CD8-positive, alpha-beta T cell (primary cell): ENCODE measurements at regions of chr1 and their contacts with region 1.

Region 1: GRCh38 chr1:206479183-206480125 is 9.2 kb downstream of the IKBKE start:
- DNase-seq: peak; percentile 46 to 82 (median 73)
- ATAC-seq: peak; percentile 93
- H3K4me3 ChIP-seq: no peak overlapping the region
- H3K4me3 Mint-ChIP-seq: no peak overlapping the region
- H3K27ac ChIP-seq: no peak overlapping the region
- H3K27ac Mint-ChIP-seq: peak overlapping the region; percentile 80
- H3K4me1 ChIP-seq: peaks cover 13% of the 10 kb centered on the region
- H3K4me1 Mint-ChIP-seq: peaks cover 10% of the 10 kb centered on the region
- H3K27me3 ChIP-seq: no peaks in the 10 kb centered on the region
- H3K27me3 Mint-ChIP-seq: no peaks in the 10 kb centered on the region
- CTCF ChIP-seq: peak; percentile 80

Region 2: GRCh38 chr1:206461602-206462455 is 17.6 kb before region 1 on chr1:
- CTCF ChIA-PET with region 1: interaction called, 170 read pairs
- POLR2A ChIA-PET with region 1: interaction called, 3 read pairs
- intact Hi-C with region 1: loop called (anchors 1 kb)
- DNase-seq: peak; percentile 54 to 82 (median 74)
- ATAC-seq: peak; percentile 95
- H3K4me3 ChIP-seq: no peak overlapping the region
- H3K4me3 Mint-ChIP-seq: no peak overlapping the region
- H3K27ac ChIP-seq: no peak overlapping the region
- H3K27ac Mint-ChIP-seq: no peak overlapping the region
- H3K4me1 ChIP-seq: peaks cover 10% of the 10 kb centered on the region
- H3K4me1 Mint-ChIP-seq: peaks cover 19% of the 10 kb centered on the region
- H3K27me3 ChIP-seq: no peaks in the 10 kb centered on the region
- H3K27me3 Mint-ChIP-seq: no peaks in the 10 kb centered on the region
- CTCF ChIP-seq: peak; percentile 75

Region 3: DNA sequence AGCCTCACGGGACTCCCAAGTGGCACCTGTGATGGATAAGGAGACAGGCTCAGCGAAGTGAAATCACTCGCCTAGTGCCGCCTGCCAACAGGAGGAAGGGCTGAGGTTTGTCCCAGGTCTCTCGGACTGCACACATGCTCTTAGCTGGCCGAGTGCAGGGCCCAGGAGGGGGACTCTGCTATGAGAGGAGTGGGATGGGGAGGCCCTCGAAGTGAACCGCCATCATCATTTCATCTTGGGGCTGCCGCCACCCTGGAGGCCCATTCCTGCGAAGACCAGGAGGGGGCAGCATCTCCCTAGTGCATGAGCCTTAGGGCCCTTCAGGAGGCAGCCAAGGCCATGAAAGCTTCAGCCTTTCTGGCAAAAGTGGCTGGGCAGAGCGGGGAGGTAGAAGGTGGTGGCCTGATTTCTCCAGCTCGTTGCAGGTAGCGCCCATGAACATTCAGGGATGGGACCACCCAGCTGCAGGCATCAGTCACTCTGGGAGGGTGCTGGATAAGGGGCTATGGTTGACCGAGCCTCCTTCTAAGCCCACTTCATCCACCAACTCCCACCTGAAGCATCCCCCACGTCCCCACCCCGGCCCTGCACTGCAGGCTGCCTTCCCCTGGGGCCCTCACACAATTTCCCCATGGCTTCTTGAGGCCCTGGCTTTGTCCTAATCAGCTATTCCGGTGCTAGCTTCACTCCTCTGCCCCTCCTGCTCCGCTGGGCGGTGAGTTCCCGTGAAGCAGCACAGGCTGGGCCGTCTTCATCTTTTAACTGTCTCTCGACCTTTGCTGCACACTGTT is 10.7 kb after region 1 on chr1:
- CTCF ChIA-PET with region 1: interaction called, 24 read pairs
- POLR2A ChIA-PET with region 1: no interaction called
- intact Hi-C with region 1: no loop called
- DNase-seq: peak; percentile 47 to 76 (median 71)
- ATAC-seq: peak; percentile 91
- H3K4me3 ChIP-seq: no peak overlapping the region
- H3K4me3 Mint-ChIP-seq: no peak overlapping the region
- H3K27ac ChIP-seq: no peak overlapping the region
- H3K27ac Mint-ChIP-seq: peak overlapping the region; percentile 18
- H3K4me1 ChIP-seq: no peaks in the 10 kb centered on the region
- H3K4me1 Mint-ChIP-seq: no peaks in the 10 kb centered on the region
- H3K27me3 ChIP-seq: no peaks in the 10 kb centered on the region
- H3K27me3 Mint-ChIP-seq: no peaks in the 10 kb centered on the region
- CTCF ChIP-seq: peak; percentile 67

Region 4: GRCh38 chr1:206496131-206496793 is 16.8 kb after region 1 on chr1:
- CTCF ChIA-PET with region 1: interaction called, 24 read pairs
- POLR2A ChIA-PET with region 1: no interaction called
- intact Hi-C with region 1: no loop called
- DNase-seq: no peak
- ATAC-seq: no peak
- H3K4me3 ChIP-seq: no peak overlapping the region
- H3K4me3 Mint-ChIP-seq: no peak overlapping the region
- H3K27ac ChIP-seq: no peak overlapping the region
- H3K27ac Mint-ChIP-seq: peak overlapping the region; percentile 74
- H3K4me1 ChIP-seq: no peaks in the 10 kb centered on the region
- H3K4me1 Mint-ChIP-seq: no peaks in the 10 kb centered on the region
- H3K27me3 ChIP-seq: no peaks in the 10 kb centered on the region
- H3K27me3 Mint-ChIP-seq: no peaks in the 10 kb centered on the region
- CTCF ChIP-seq: no peak

Region 5: GRCh38 chr1:206507284-206508129 is 28.1 kb after region 1 on chr1 and contains the start of gene RASSF5:
- CTCF ChIA-PET with region 1: interaction called, 10 read pairs
- POLR2A ChIA-PET with region 1: interaction called, 4 read pairs
- intact Hi-C with region 1: no loop called
- DNase-seq: peak; percentile 60 to 88 (median 77)
- ATAC-seq: peak; percentile 89
- H3K4me3 ChIP-seq: peak within 1 kb of the TSS; percentile 58 to 62
- H3K4me3 Mint-ChIP-seq: peak within 1 kb of the TSS; percentile 84
- H3K27ac ChIP-seq: no peak within 1 kb of the TSS
- H3K27ac Mint-ChIP-seq: no peak within 1 kb of the TSS
- H3K4me1 ChIP-seq: peaks cover 9% of the 10 kb centered on the region
- H3K4me1 Mint-ChIP-seq: peaks cover 46% of the 10 kb centered on the region
- H3K27me3 ChIP-seq: peaks cover 0 to 4% of the 10 kb centered on the region in 2 experiments
- H3K27me3 Mint-ChIP-seq: peaks cover 22% of the 10 kb centered on the region
- CTCF ChIP-seq: no peak
- total RNA-seq, gene RASSF5: 209 to 213 TPM

Region 6: GRCh38 chr1:206658264-206658980 is 179.0 kb after region 1 on chr1:
- CTCF ChIA-PET with region 1: interaction called, 89 read pairs
- POLR2A ChIA-PET with region 1: no interaction called
- intact Hi-C with region 1: no loop called
- DNase-seq: peak in 8 of 9 experiments; percentile 23 to 67 (median 44)
- ATAC-seq: peak; percentile 89
- H3K4me3 ChIP-seq: no peak overlapping the region
- H3K4me3 Mint-ChIP-seq: no peak overlapping the region
- H3K27ac ChIP-seq: no peak overlapping the region
- H3K27ac Mint-ChIP-seq: no peak overlapping the region
- H3K4me1 ChIP-seq: peaks cover 9% of the 10 kb centered on the region
- H3K4me1 Mint-ChIP-seq: peaks cover 7% of the 10 kb centered on the region
- H3K27me3 ChIP-seq: peaks cover 0 to 7% of the 10 kb centered on the region in 2 experiments
- H3K27me3 Mint-ChIP-seq: peaks cover 36% of the 10 kb centered on the region
- CTCF ChIP-seq: peak; percentile 96